HepG2 (cell line): ENCODE measurements at regions of chr17 and their contacts with region 1.

Region 1: DNA sequence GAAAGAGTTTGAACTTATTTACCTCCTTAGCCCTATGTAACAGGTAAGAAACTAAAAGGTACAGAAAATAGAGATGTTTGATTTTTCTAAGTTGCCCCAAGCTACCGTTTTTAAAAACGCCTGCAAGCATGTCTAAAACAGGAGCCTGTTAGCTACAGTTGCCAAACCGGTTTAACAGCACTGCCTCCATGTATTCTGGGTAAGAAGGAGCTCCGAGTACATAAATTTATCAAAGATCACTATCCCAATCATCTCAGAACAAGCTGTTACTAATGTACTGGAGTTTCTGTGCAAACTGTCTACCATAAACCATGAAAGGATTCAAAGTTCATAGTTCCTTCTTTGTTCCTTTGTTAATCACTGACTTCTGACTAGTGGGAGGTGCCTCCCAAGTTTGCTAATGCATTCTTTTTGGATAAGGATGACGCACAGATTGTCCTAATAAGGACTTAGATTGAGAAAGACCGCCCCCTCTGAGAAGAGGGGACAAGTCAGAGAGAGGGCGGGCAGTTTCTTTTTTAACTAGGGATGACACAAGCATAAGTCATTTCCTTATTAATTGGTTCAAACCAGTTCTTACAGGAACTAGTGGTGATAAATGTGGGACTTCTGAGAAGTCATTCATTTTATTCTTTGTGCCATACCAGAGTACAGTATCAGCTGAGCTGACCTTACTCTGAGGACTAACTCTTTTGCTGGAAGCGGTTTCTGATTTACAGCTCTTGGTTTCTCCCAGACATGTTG is 55.3 kb downstream of the TUBD1 start:
- DNase-seq: peak; percentile 100
- ATAC-seq: peak; percentile 86
- H3K4me3 ChIP-seq: peak overlapping the region; percentile 79 to 94 (median 80)
- H3K27ac ChIP-seq: peak overlapping the region; percentile 99
- H3K4me1 ChIP-seq: peaks cover 41% of the 10 kb centered on the region
- H3K27me3 ChIP-seq: peaks cover 0 to 5% of the 10 kb centered on the region in 2 experiments; a peak in 1 of 5 replicates
- CTCF ChIP-seq: no peak
- EP300 ChIP-seq: peak; percentile 90 to 96
- POLR2A ChIP-seq: peak; percentile 90 to 100
- RAD21 ChIP-seq: 0 out of 2 replicates have a peak, but pooled peaks have one; percentile 10

Region 2: DNA sequence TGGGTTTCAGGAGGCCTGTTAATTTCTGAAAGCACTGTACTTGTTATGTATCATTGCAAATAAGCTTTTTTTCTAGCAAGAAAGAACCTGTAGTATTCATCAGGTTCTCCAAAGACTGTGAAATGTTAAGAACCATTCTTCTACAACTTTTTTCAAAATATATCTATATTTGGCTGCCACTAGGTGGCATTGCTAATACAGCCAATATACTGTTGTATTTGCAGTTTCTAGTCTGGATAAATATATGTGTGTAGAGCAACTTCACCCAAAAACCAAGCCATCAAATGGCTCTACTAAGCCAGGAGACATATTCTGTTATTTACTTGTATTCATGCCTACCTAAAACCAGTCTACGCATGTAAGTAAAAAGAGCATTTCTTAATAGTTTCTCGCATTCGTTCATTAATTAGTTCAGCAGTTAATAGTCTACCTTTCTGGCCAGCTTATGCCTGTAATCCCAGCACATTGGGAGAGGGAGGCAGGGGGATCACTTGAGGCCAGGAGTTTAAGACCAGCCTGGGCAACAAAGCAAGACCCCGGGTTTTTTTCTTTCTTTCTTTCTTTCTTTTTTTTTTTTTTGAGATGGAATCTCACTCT is 90.5 kb before region 1 on chr17:
- CTCF ChIA-PET with region 1: interaction called, 24 read pairs
- POLR2A ChIA-PET with region 1: interaction called, 400 read pairs
- in situ Hi-C with region 1: no loop called
- intact Hi-C with region 1: no loop called
- DNase-seq: peak; percentile 62
- ATAC-seq: peak; percentile 69
- H3K4me3 ChIP-seq: no peak overlapping the region
- H3K27ac ChIP-seq: no peak overlapping the region
- H3K4me1 ChIP-seq: peaks cover 25% of the 10 kb centered on the region
- H3K27me3 ChIP-seq: no peaks in the 10 kb centered on the region
- CTCF ChIP-seq: peak; percentile 71
- EP300 ChIP-seq: no peak
- POLR2A ChIP-seq: no peak
- RAD21 ChIP-seq: peak; percentile 34; the same call in 1 of the 2 replicates

Region 3: GRCh38 chr17:59769891-59770290 is 67.6 kb before region 1 on chr17:
- CTCF ChIA-PET with region 1: no interaction called
- POLR2A ChIA-PET with region 1: interaction called, 20 read pairs
- in situ Hi-C with region 1: no loop called
- intact Hi-C with region 1: no loop called
- DNase-seq: no peak
- ATAC-seq: no peak
- H3K4me3 ChIP-seq: no peak overlapping the region
- H3K27ac ChIP-seq: no peak overlapping the region
- H3K4me1 ChIP-seq: peaks cover 19% of the 10 kb centered on the region
- H3K27me3 ChIP-seq: no peaks in the 10 kb centered on the region
- CTCF ChIP-seq: no peak
- EP300 ChIP-seq: no peak
- POLR2A ChIP-seq: no peak
- RAD21 ChIP-seq: no peak

Region 4: DNA sequence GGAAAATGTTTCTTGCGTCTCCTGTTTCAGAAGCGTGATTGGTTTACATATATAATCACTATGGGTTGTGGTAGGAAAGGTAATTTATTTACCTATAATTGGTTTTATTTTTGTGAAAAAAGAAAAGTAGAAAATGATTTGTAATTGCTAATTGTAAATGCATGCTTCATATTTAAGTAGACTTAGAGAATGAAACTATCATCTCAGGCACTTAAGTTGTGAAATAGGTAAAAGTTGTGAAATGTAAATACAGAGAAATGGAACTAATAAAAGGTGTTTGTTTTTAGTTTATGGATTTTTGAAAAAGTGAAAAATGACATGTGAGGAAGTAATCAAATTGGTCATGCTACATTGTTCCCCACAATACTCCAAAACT is 34.1 kb before region 1 on chr17:
- CTCF ChIA-PET with region 1: no interaction called
- POLR2A ChIA-PET with region 1: interaction called, 11 read pairs
- in situ Hi-C with region 1: no loop called
- intact Hi-C with region 1: no loop called
- DNase-seq: peak; percentile 35
- ATAC-seq: no peak
- H3K4me3 ChIP-seq: no peak overlapping the region
- H3K27ac ChIP-seq: peak overlapping the region; percentile 54
- H3K4me1 ChIP-seq: peaks cover 17% of the 10 kb centered on the region
- H3K27me3 ChIP-seq: no peaks in the 10 kb centered on the region; a peak in 1 of 5 replicates
- CTCF ChIP-seq: no peak
- EP300 ChIP-seq: peak in 1 of 2 experiments; percentile 21; a peak in 1 of 4 replicates
- POLR2A ChIP-seq: no peak
- RAD21 ChIP-seq: no peak

Region 5: DNA sequence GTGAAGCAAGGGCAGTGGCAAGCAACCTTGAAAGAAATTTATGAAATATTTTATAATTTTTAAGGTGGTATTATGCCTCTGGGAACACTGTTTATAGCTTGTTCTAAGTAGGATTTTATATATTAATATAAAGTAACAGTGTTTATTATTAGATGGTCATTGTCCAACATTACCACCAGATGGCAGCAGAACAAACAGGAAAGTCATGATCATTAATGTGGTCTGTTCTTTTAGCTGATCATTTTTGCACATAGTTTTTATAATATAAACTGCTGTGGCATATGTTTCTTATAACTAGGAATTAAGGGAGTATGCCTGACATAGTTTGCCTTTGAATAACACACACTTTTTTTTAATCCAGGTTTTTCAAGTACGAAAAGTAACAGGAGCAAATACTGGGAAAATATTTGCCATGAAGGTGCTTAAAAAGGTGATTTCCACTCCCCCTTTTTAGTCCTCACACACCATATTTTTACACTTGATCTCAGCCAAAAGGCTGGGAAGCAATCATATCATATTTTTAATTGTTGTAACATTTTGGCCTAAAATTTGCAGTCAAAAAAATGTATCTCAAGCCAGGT is 76.9 kb after region 1 on chr17:
- CTCF ChIA-PET with region 1: no interaction called
- POLR2A ChIA-PET with region 1: no interaction called
- in situ Hi-C with region 1: no loop called
- intact Hi-C with region 1: no loop called
- DNase-seq: peak; percentile 51
- ATAC-seq: peak; percentile 47; the same call in 2 of the 3 replicates
- H3K4me3 ChIP-seq: no peak overlapping the region
- H3K27ac ChIP-seq: no peak overlapping the region
- H3K4me1 ChIP-seq: no peaks in the 10 kb centered on the region
- H3K27me3 ChIP-seq: no peaks in the 10 kb centered on the region; a peak in 1 of 5 replicates
- CTCF ChIP-seq: peak; percentile 56
- EP300 ChIP-seq: no peak
- POLR2A ChIP-seq: no peak
- RAD21 ChIP-seq: no peak

Region 6: GRCh38 chr17:60108306-60109055 is 271.0 kb after region 1 on chr17:
- CTCF ChIA-PET with region 1: no interaction called
- POLR2A ChIA-PET with region 1: no interaction called
- in situ Hi-C with region 1: no loop called
- intact Hi-C with region 1: no loop called
- DNase-seq: no peak
- ATAC-seq: no peak
- H3K4me3 ChIP-seq: no peak overlapping the region
- H3K27ac ChIP-seq: no peak overlapping the region
- H3K4me1 ChIP-seq: no peaks in the 10 kb centered on the region
- H3K27me3 ChIP-seq: peaks cover 0 to 9% of the 10 kb centered on the region in 2 experiments; a peak in 3 of 5 replicates
- CTCF ChIP-seq: no peak
- EP300 ChIP-seq: no peak
- POLR2A ChIP-seq: no peak
- RAD21 ChIP-seq: no peak